T-cell (primary cell): ENCODE measurements at regions of chr10 and their contacts with region 1.

Region 1: DNA sequence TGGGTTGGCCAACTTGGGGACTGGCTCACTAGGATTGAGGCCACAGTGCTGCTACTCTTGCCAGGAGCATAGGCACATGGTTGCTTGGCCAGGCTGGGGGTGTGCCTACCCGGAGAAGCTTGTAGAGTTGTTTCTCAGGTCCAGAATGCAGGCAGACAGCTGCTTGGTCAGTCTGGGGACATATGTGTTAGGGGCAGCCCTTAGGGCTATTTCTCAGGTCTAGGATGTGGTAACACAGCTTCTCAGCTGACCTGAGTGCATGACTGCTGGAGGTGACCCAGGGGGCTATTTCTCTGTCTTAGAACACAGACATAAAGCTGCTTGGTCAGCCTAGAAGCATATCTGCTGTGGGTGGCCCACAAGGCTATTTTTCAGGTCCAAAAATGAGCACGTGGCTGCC is 63.5 kb downstream of the SLC16A9 start:
- DNase-seq: no peak
- ATAC-seq: no peak
- H3K4me3 ChIP-seq: no peak overlapping the region
- H3K4me3 Mint-ChIP-seq: no peak overlapping the region
- H3K27ac ChIP-seq: no peak overlapping the region
- H3K27ac Mint-ChIP-seq: no peak overlapping the region
- H3K4me1 ChIP-seq: no peaks in the 10 kb centered on the region
- H3K4me1 Mint-ChIP-seq: no peaks in the 10 kb centered on the region
- H3K27me3 ChIP-seq: peaks cover 0 to 11% of the 10 kb centered on the region in 2 experiments
- H3K27me3 Mint-ChIP-seq: no peaks in the 10 kb centered on the region

Region 2: GRCh38 chr10:60502621-60503020 is 856.5 kb after region 1 on chr10:
- CTCF ChIA-PET with region 1: interaction called in 1 of 2 experiments, 11 read pairs
- POLR2A ChIA-PET with region 1: no interaction called
- DNase-seq: no peak
- ATAC-seq: no peak
- H3K4me3 ChIP-seq: no peak overlapping the region
- H3K4me3 Mint-ChIP-seq: no peak overlapping the region
- H3K27ac ChIP-seq: no peak overlapping the region
- H3K27ac Mint-ChIP-seq: no peak overlapping the region
- H3K4me1 ChIP-seq: no peaks in the 10 kb centered on the region
- H3K4me1 Mint-ChIP-seq: peaks cover 12 to 20% (median 20%) of the 10 kb centered on the region in 3 donors
- H3K27me3 ChIP-seq: no peaks in the 10 kb centered on the region
- H3K27me3 Mint-ChIP-seq: no peaks in the 10 kb centered on the region